HCT116 (cell line): ENCODE measurements at regions of chr17 and their contacts with region 1.

Region 1: GRCh38 chr17:73710095-73710592 is 65.9 kb upstream of the SDK2 start:
- DNase-seq: peak; percentile 67
- ATAC-seq: peak; percentile 94
- H3K4me3 ChIP-seq: no peak overlapping the region
- H3K27ac ChIP-seq: no peak overlapping the region
- H3K4me1 ChIP-seq: peaks cover 0 to 5% of the 10 kb centered on the region in 2 experiments; a peak in 1 of 4 replicates
- H3K27me3 ChIP-seq: peaks cover 55% of the 10 kb centered on the region
- CTCF ChIP-seq: peak; percentile 83 to 94 (median 90)
- POLR2A ChIP-seq: no peak
- RAD21 ChIP-seq: peak; percentile 90

Region 2: GRCh38 chr17:73562896-73563295 is 147.2 kb before region 1 on chr17:
- CTCF ChIA-PET with region 1: no interaction called
- POLR2A ChIA-PET with region 1: no interaction called
- RAD21 ChIA-PET with region 1: no interaction called
- intact Hi-C with region 1: loop called (anchors 2 kb)
- DNase-seq: no peak
- ATAC-seq: no peak
- H3K4me3 ChIP-seq: no peak overlapping the region
- H3K27ac ChIP-seq: no peak overlapping the region
- H3K4me1 ChIP-seq: no peaks in the 10 kb centered on the region
- H3K27me3 ChIP-seq: 0 out of 2 replicates have a peak, but pooled peaks cover 6% of the 10 kb centered on the region
- CTCF ChIP-seq: no peak
- POLR2A ChIP-seq: no peak
- RAD21 ChIP-seq: no peak

Region 3: GRCh38 chr17:73595479-73595878 is 114.7 kb before region 1 on chr17:
- CTCF ChIA-PET with region 1: no interaction called
- POLR2A ChIA-PET with region 1: no interaction called
- RAD21 ChIA-PET with region 1: no interaction called
- intact Hi-C with region 1: loop called (anchors 10 kb)
- DNase-seq: no peak
- ATAC-seq: peak; percentile 88
- H3K4me3 ChIP-seq: no peak overlapping the region
- H3K27ac ChIP-seq: no peak overlapping the region
- H3K4me1 ChIP-seq: no peaks in the 10 kb centered on the region
- H3K27me3 ChIP-seq: no peaks in the 10 kb centered on the region
- CTCF ChIP-seq: peak; percentile 53 to 75 (median 74); a peak in 5 of 6 replicates
- POLR2A ChIP-seq: no peak
- RAD21 ChIP-seq: peak; percentile 74